Heart left ventricle (tissue), 16 donors: ENCODE measurements at regions of chr19 and their contacts with region 1.

Region 1: DNA sequence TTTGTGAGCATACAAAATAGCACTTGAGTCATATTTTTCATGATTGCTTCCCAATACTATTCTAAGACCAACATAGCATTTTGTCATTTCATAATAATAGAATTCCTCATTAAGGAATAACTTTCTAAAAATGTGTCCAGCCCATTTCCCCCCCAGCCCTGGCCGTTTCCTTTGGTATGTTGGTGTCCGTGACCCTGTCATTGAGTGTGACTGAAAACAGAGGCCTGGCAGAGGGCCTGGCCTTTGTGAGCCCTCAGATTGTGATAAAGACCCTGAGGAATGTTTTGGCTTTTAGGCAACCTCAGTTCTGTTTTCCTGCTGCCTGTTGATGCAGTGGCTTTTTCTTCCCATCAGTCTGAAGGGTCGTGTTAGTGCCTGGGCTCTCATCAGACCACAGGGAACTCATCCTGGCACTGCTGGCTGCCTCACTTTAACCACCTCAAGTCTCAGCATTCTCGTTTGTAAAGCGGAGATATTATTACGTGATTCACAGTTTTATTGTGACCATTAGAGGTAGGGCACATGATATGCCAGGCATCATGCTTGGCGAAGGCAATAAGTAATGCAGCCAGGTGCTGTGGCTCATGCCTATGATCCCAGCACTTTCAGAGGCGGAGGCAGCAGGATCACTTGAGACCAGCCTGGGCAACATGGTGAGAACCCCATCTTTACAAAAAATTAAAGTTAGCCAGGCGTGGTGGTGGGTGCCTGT is 13.8 kb downstream of the SPINT2 start:
- DNase-seq: peak in 4 of 5 donors; percentile 79 to 86 (median 84)
- ATAC-seq: peak; percentile 80 to 93 (median 90)
- H3K4me3 ChIP-seq: no peak overlapping the region
- H3K27ac ChIP-seq: peak overlapping the region; percentile 57 to 90 (median 78)
- H3K4me1 ChIP-seq: peaks cover 4 to 78% (median 47%) of the 10 kb centered on the region in 12 donors
- H3K27me3 ChIP-seq: no peaks in the 10 kb centered on the region
- CTCF ChIP-seq: no peak
- POLR2A ChIP-seq: peak in 1 of 2 donors; percentile 21

Region 2: GRCh38 chr19:38213911-38214625 is 64.1 kb before region 1 on chr19:
- intact Hi-C with region 1: no loop called
- DNase-seq: no peak
- ATAC-seq: no peak
- H3K4me3 ChIP-seq: no peak overlapping the region
- H3K27ac ChIP-seq: no peak overlapping the region
- H3K4me1 ChIP-seq: peaks cover 0 to 26% (median 16%) of the 10 kb centered on the region in 12 donors
- H3K27me3 ChIP-seq: peaks cover 0 to 37% (median 19%) of the 10 kb centered on the region in 9 donors
- CTCF ChIP-seq: no peak
- POLR2A ChIP-seq: no peak

Region 3: DNA sequence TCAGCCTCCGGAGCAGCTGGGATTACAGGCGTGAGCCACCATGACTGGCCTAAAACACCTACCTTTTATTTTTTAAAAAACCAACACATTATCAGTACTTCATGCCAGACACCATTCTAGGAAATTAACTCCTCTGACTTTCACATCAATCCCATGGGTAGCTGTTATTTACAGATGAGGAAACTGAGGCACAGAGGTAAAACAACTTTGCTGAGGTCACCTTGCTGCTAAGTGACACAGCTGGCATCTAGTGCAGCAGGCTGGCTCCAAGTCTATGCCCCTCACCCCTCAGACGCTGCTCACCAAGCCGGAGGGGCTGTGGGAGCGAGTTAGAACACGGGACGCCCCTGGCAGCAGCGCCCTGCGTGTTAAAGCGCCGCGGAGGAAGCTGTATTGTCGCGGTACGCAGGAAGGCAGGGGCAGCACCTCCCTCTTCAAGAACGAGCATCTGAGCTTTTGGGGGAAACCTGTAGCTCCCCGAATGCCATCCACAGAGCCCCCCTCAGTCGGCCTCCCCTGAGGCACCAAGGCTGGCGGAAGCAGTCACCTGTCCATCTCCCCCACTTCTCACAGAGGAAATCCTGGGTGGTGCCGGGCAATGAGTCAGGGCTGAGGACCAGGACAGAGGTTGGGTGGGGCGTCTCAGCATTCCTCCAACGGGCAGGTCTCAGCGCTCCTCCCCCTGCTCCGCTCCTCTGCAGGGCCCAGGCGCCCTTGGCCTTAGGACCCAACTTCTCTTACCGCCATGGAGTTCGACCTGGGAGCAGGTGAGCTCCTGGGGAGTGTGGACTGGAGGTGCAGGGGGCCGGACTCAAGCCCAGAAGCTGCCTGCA is 25.6 kb after region 1 on chr19 and contains the start of gene C19orf33:
- intact Hi-C with region 1: loop called in 1 of 10 experiments (anchors 2 kb)
- DNase-seq: peak in 3 of 5 donors; percentile 52 to 78 (median 56)
- ATAC-seq: peak; percentile 42 to 77 (median 60)
- H3K4me3 ChIP-seq: peak within 1 kb of the TSS in 9 of 12 donors; percentile 6 to 41 (median 30)
- H3K27ac ChIP-seq: peak within 1 kb of the TSS in 9 of 12 donors; percentile 9 to 89 (median 52)
- H3K4me1 ChIP-seq: peaks cover 0 to 7% (median 0%) of the 10 kb centered on the region in 12 donors
- H3K27me3 ChIP-seq: no peaks in the 10 kb centered on the region
- CTCF ChIP-seq: no peak
- POLR2A ChIP-seq: peak in 1 of 2 donors; percentile 23
- total RNA-seq, gene C19orf33: 3.5 to 73.1 (median 11.5) TPM in 8 of 9 donors, not detected in the other

Region 4: DNA sequence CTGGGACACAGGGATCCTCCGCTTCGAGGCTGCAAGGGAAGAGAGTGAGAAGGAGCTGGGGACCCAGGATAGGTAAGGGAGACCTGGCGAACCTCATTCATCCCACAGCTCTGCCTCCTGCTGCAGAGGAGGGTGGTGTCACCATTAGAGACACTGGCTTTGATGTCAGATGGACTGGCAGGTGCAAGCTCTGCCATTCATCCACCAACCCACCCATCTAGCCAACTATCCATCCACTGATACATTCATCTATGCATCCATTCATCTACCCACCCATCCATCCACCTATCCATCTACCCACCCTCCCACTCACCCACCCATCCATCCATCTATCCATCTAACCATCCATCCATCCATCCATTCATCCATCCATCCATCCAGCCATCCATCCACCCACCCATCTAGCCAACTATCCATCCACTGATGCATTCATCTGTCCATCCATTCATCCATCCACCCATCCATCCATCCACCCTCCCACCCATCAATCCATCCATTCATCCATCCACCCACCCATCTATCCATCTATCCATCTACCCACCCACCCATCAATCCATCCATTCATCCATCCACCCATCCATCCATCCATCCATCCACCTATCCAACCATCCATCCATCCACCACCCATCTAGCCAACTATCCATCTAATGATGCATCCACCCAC is 31.6 kb after region 1 on chr19:
- intact Hi-C with region 1: loop called in 2 of 10 experiments (anchors 2 to 5 kb)
- DNase-seq: no peak
- ATAC-seq: no peak
- H3K4me3 ChIP-seq: no peak overlapping the region
- H3K27ac ChIP-seq: no peak overlapping the region
- H3K4me1 ChIP-seq: peaks cover 0 to 19% (median 0%) of the 10 kb centered on the region in 12 donors
- H3K27me3 ChIP-seq: no peaks in the 10 kb centered on the region
- CTCF ChIP-seq: no peak
- POLR2A ChIP-seq: no peak

Region 5: GRCh38 chr19:38321646-38322196 is 43.6 kb after region 1 on chr19:
- intact Hi-C with region 1: loop called in 7 of 10 experiments (anchors 1 to 5 kb)
- DNase-seq: peak; percentile 78 to 91 (median 84)
- ATAC-seq: peak; percentile 84 to 91 (median 88)
- H3K4me3 ChIP-seq: peak overlapping the region in 4 of 12 donors; percentile 10 to 80 (median 46)
- H3K27ac ChIP-seq: peak overlapping the region in 11 of 12 donors; percentile 58 to 94 (median 83)
- H3K4me1 ChIP-seq: peaks cover 0 to 68% (median 35%) of the 10 kb centered on the region in 12 donors
- H3K27me3 ChIP-seq: no peaks in the 10 kb centered on the region
- CTCF ChIP-seq: peak in 1 of 12 donors; percentile 5
- POLR2A ChIP-seq: peak in 1 of 2 donors; percentile 17